Spleen (tissue), 13 donors: ENCODE measurements at regions of chr12 and their contacts with region 1.

Region 1: DNA sequence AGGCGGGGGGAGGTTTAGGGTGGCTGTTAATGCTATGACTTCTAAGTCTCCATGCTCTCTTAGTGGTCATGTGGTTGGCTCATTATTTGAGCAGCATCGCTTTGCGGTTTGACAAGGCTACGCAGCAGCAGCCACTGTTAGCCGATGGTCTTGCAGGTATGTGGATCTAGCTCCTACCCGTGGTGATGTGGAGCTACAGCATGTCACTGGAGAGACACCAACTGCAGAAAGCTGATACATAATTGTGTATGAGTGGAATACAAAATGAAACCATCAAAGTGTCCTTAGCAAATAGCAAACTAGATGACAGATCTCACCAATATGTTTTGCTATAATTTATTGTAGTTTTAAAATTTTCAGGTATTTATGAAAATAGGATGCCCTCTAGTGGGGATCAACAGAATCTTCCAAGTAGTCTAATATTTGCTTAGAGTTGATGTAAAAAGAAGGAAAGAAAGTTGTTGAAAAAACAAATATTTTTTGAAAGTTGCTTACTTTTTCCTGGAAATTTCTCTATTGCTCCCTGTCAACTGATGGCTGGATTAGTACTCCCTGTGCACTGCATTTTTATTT is 94.9 kb downstream of the NAV3 start:
- DNase-seq: peak; percentile 70
- H3K4me3 ChIP-seq: peak overlapping the region in 2 of 8 donors; percentile 1 to 29
- H3K27ac ChIP-seq: peak overlapping the region in 1 of 8 donors; percentile 28
- H3K4me1 ChIP-seq: peaks cover 0 to 9% (median 0%) of the 10 kb centered on the region in 6 donors
- H3K27me3 ChIP-seq: no peaks in the 10 kb centered on the region
- CTCF ChIP-seq: peak; percentile 39 to 89 (median 69)
- POLR2A ChIP-seq: no peak

Region 2: DNA sequence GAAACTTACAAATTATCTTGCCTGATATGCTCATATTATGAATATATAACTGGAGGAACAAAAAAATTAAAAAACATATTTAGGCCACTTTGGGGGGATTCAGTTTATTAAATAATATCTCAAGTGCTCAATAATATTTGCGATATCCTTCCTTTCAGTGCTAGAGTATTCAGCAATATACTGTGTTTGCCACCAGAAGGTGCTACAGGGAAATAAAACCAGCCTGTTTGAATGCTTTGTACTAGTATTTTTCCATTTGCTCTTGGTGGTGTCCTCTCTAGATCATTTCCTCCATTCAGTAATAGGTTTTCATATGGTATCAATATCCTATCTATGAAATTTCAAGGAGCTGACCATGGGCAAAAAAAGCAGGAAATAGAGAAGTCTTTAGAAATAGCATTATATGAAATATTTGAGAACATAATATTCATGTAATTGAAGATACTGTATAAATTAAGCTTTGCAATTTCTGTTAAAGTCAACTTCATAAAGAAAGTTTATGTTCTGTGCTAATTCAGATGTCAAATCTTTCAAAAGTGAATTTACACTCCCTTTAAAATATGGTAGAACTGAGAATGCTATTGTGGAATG is 201.2 kb before region 1 on chr12:
- intact Hi-C with region 1: loop called (anchors 5 kb)
- DNase-seq: no peak
- H3K4me3 ChIP-seq: no peak overlapping the region
- H3K27ac ChIP-seq: no peak overlapping the region
- H3K4me1 ChIP-seq: peaks cover 0 to 7% (median 0%) of the 10 kb centered on the region in 6 donors
- H3K27me3 ChIP-seq: no peaks in the 10 kb centered on the region
- CTCF ChIP-seq: peak in 10 of 11 experiments; percentile 16 to 69 (median 46)
- POLR2A ChIP-seq: no peak

Region 3: DNA sequence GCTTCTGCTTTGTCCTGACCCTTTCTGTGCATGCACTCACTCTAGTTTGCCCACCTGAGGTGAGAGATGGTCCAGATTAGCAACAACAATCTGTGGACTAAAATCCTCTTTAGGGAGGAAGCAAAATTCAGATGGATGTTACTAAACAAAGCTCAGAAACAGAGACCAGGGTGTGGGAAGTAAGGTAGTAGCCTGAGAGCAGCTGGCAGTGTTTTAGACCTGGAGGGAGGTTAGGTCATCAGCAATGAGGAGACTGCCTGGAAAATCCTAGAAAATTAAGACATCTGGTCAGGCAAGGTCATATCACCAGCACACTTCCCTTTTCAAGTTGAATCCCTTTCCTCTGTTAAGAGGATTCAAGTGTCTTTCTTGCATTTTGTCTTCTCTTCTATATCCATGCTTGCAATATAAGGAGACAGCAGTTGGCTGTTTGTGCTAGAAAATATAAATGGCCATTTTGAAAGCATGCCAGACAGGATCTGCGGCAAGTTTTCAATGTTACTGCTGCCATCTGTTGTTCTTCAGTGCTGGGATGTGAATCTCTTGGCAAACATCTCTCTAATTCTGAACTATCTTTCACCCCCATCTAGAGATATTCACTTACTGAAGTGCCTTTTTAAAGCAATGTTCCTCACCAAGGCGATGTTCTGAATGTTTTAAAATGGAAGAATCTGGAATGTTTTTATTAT is 171.4 kb after region 1 on chr12:
- intact Hi-C with region 1: no loop called
- DNase-seq: no peak
- H3K4me3 ChIP-seq: no peak overlapping the region
- H3K27ac ChIP-seq: peak overlapping the region in 6 of 8 donors; percentile 7 to 36 (median 24)
- H3K4me1 ChIP-seq: peaks cover 0 to 12% (median 0%) of the 10 kb centered on the region in 6 donors
- H3K27me3 ChIP-seq: no peaks in the 10 kb centered on the region
- CTCF ChIP-seq: no peak
- POLR2A ChIP-seq: no peak